ENCODE measurements at regions of chr6 and their contacts with region 1.

Region 1: DNA sequence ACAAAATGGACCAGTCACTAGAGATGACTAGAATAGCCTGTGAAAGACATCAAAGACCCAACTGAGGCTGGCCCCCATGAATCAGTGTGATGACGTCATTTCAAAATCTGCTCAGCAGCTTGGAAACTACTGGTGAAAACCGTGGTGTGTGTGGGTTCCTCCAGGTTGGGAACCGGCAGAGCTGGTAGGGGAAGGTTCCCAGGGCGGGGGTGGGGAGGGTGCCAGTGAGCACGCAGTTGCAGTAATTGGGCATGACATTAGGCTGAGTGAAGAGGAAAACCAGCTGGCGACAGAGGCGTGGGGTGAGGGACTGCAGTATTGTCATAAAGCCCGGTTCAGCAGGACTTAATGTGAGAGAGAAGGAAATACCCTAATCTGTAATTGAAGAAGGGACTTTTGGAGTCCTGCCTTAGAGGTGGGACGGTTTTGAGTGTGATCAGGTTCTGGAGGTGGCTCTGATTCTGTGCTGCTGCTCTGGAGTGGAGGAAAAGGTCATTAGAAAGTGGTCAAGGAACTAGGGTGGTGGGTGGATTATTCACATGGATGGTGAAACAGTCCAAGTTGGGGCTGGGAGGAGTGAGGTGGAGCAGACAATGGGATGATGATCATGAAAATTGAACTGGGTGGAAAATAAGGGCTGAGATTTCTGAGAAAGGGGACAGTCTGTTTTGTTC is 52.0 kb upstream of the MTHFD1L start:
- DNase-seq: peak; percentile 75
- H3K4me3 Mint-ChIP-seq: no peak overlapping the region
- H3K27ac Mint-ChIP-seq: peak overlapping the region; percentile 85
- H3K4me1 Mint-ChIP-seq: peaks cover 23% of the 10 kb centered on the region
- H3K27me3 Mint-ChIP-seq: peaks cover 25% of the 10 kb centered on the region

Region 2: GRCh38 chr6:149934249-149935156 is 879.0 kb before region 1 on chr6:
- CTCF ChIA-PET with region 1: no interaction called
- intact Hi-C with region 1: loop called (anchors 2 kb)
- DNase-seq: peak; percentile 84
- H3K4me3 Mint-ChIP-seq: no peak overlapping the region
- H3K27ac Mint-ChIP-seq: no peak overlapping the region
- H3K4me1 Mint-ChIP-seq: peaks cover 17% of the 10 kb centered on the region
- H3K27me3 Mint-ChIP-seq: peaks cover 71% of the 10 kb centered on the region

Region 3: GRCh38 chr6:150079604-150080003 is 733.9 kb before region 1 on chr6:
- CTCF ChIA-PET with region 1: interaction called, 10 read pairs
- intact Hi-C with region 1: loop called (anchors 1 kb)
- DNase-seq: peak; percentile 35
- H3K4me3 Mint-ChIP-seq: no peak overlapping the region
- H3K27ac Mint-ChIP-seq: no peak overlapping the region
- H3K4me1 Mint-ChIP-seq: peaks cover 10% of the 10 kb centered on the region
- H3K27me3 Mint-ChIP-seq: peaks cover 2% of the 10 kb centered on the region

Region 4: GRCh38 chr6:150417899-150418826 is 395.3 kb before region 1 on chr6:
- CTCF ChIA-PET with region 1: interaction called, 56 read pairs
- intact Hi-C with region 1: loop called (anchors 1 kb)
- DNase-seq: peak; percentile 52
- H3K4me3 Mint-ChIP-seq: peak overlapping the region; percentile 59
- H3K27ac Mint-ChIP-seq: peak overlapping the region; percentile 72
- H3K4me1 Mint-ChIP-seq: peaks cover 24% of the 10 kb centered on the region
- H3K27me3 Mint-ChIP-seq: peaks cover 15% of the 10 kb centered on the region

Region 5: GRCh38 chr6:150622941-150623874 is 190.2 kb before region 1 on chr6:
- CTCF ChIA-PET with region 1: no interaction called
- intact Hi-C with region 1: loop called (anchors 1 kb)
- DNase-seq: peak; percentile 18
- H3K4me3 Mint-ChIP-seq: no peak overlapping the region
- H3K27ac Mint-ChIP-seq: peak overlapping the region; percentile 3
- H3K4me1 Mint-ChIP-seq: peaks cover 17% of the 10 kb centered on the region
- H3K27me3 Mint-ChIP-seq: peaks cover 40% of the 10 kb centered on the region

Region 6: GRCh38 chr6:150848400-150848799 is 34.9 kb after region 1 on chr6:
- CTCF ChIA-PET with region 1: no interaction called
- intact Hi-C with region 1: no loop called
- DNase-seq: no peak
- H3K4me3 Mint-ChIP-seq: no peak overlapping the region
- H3K27ac Mint-ChIP-seq: no peak overlapping the region
- H3K4me1 Mint-ChIP-seq: no peaks in the 10 kb centered on the region
- H3K27me3 Mint-ChIP-seq: peaks cover 11% of the 10 kb centered on the region

Region 7: GRCh38 chr6:150865406-150866146 is 52.1 kb after region 1 on chr6 and contains the start of gene MTHFD1L:
- CTCF ChIA-PET with region 1: interaction called, 3 read pairs
- intact Hi-C with region 1: loop called (anchors 2 kb)
- DNase-seq: peak; percentile 79
- H3K4me3 Mint-ChIP-seq: peak within 1 kb of the TSS; percentile 96
- H3K27ac Mint-ChIP-seq: peak within 1 kb of the TSS; percentile 91
- H3K4me1 Mint-ChIP-seq: peaks cover 30% of the 10 kb centered on the region
- H3K27me3 Mint-ChIP-seq: peaks cover 15% of the 10 kb centered on the region
- total RNA-seq, gene MTHFD1L: 181 to 194 TPM